ENCODE measurements at regions of chr4 and their contacts with region 1.

Region 1: GRCh38 chr4:41384992-41385391 is 128.3 kb downstream of the UCHL1 start:
- DNase-seq: peak; percentile 99
- H3K4me3 ChIP-seq: no peak overlapping the region
- H3K27ac ChIP-seq: peak overlapping the region; percentile 39
- H3K4me1 ChIP-seq: peaks cover 18% of the 10 kb centered on the region
- H3K27me3 ChIP-seq: peaks cover 3 to 5% of the 10 kb centered on the region in 2 experiments
- CTCF ChIP-seq: no peak
- POLR2A ChIP-seq: peak; percentile 49

Region 2: DNA sequence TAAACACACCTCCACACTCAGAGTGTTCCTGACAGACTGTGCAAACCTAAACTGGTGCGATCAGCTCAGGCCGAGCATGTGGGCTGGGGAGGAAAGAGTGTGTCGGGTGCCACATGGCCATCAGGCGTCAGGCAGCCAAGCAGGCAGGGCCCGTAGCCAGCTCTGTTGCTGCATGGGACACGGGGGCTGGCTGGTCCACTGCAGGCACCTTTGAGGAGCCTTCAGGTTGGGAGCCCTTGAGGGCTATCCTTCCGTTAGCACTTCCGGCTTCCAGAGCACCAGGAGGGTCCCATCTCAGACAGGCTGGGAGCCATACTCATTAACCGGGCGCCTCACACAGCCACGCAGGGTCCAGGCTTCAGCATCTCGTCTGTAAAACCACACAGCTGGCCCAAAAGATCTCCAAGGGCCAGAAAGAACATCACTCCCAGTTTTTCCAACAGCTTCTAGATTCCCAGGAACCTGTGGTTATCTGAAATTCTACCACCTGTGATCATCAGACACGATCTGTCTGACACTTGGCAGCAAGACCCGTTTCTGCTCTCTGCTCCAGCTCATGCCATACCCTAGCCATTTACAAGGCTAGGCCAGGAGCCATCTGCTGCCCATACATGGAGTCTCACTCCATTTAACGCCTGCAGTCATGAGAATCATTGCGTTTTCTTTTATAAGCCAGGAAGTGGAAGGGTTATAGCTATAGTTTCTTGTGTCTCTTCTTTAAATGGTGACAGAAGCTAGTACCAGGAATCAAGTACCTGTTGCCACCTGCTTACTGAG is 547.7 kb before region 1 on chr4:
- CTCF ChIA-PET with region 1: no interaction called
- POLR2A ChIA-PET with region 1: no interaction called
- dilution Hi-C with region 1: no loop called
- intact Hi-C with region 1: no loop called
- DNase-seq: no peak
- H3K4me3 ChIP-seq: no peak overlapping the region
- H3K27ac ChIP-seq: no peak overlapping the region
- H3K4me1 ChIP-seq: peaks cover 4% of the 10 kb centered on the region
- H3K27me3 ChIP-seq: no peaks in the 10 kb centered on the region
- CTCF ChIP-seq: no peak
- POLR2A ChIP-seq: no peak

Region 3: GRCh38 chr4:41072021-41072777 is 312.8 kb before region 1 on chr4:
- CTCF ChIA-PET with region 1: no interaction called
- POLR2A ChIA-PET with region 1: no interaction called
- dilution Hi-C with region 1: no loop called
- intact Hi-C with region 1: no loop called
- DNase-seq: no peak
- H3K4me3 ChIP-seq: no peak overlapping the region
- H3K27ac ChIP-seq: no peak overlapping the region
- H3K4me1 ChIP-seq: no peaks in the 10 kb centered on the region
- H3K27me3 ChIP-seq: no peaks in the 10 kb centered on the region
- CTCF ChIP-seq: no peak
- POLR2A ChIP-seq: no peak

Region 4: DNA sequence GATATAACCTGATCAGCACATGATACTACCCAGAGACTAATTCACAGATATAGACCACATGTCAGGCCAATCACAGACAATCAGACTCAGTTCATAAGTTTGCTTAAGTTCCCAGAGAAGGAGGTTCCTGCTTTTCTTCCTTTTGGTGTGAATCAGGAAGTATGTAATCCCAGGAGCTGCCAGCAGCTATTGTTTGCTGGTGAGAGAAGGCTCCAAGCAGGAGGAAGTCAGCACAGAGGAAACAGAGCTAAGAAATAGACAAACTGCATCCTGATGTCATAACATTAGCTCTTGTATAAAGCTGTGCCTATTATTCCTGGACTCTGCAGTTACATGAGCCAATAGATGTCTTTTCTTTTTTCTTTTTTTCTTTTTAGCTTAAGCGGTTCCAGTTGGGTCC is 77.4 kb before region 1 on chr4:
- CTCF ChIA-PET with region 1: no interaction called
- POLR2A ChIA-PET with region 1: no interaction called
- dilution Hi-C with region 1: no loop called
- intact Hi-C with region 1: loop called (anchors 5 kb)
- DNase-seq: peak; percentile 95
- H3K4me3 ChIP-seq: no peak overlapping the region
- H3K27ac ChIP-seq: peak overlapping the region; percentile 53
- H3K4me1 ChIP-seq: peaks cover 11% of the 10 kb centered on the region
- H3K27me3 ChIP-seq: peaks cover 6 to 7% of the 10 kb centered on the region in 2 experiments
- CTCF ChIP-seq: no peak
- POLR2A ChIP-seq: no peak

Region 5: GRCh38 chr4:41360214-41360920 is 24.6 kb before region 1 on chr4:
- CTCF ChIA-PET with region 1: interaction called, 3 read pairs
- POLR2A ChIA-PET with region 1: no interaction called
- dilution Hi-C with region 1: no loop called
- intact Hi-C with region 1: loop called (anchors 2 kb)
- DNase-seq: peak; percentile 70
- H3K4me3 ChIP-seq: peak overlapping the region; percentile 28 to 76 (median 40)
- H3K27ac ChIP-seq: no peak overlapping the region
- H3K4me1 ChIP-seq: peaks cover 3% of the 10 kb centered on the region
- H3K27me3 ChIP-seq: peaks cover 7 to 52% of the 10 kb centered on the region in 2 experiments
- CTCF ChIP-seq: no peak
- POLR2A ChIP-seq: no peak

Region 6: GRCh38 chr4:41427306-41427882 is 42.4 kb after region 1 on chr4:
- CTCF ChIA-PET with region 1: no interaction called
- POLR2A ChIA-PET with region 1: no interaction called
- dilution Hi-C with region 1: no loop called
- intact Hi-C with region 1: loop called (anchors 1 kb)
- DNase-seq: peak; percentile 98
- H3K4me3 ChIP-seq: no peak overlapping the region
- H3K27ac ChIP-seq: peak overlapping the region; percentile 40
- H3K4me1 ChIP-seq: peaks cover 37% of the 10 kb centered on the region
- H3K27me3 ChIP-seq: peaks cover 17 to 42% of the 10 kb centered on the region in 2 experiments
- CTCF ChIP-seq: no peak
- POLR2A ChIP-seq: no peak

Region 7: GRCh38 chr4:41525129-41525528 is 140.1 kb after region 1 on chr4:
- CTCF ChIA-PET with region 1: no interaction called
- POLR2A ChIA-PET with region 1: no interaction called
- dilution Hi-C with region 1: no loop called
- intact Hi-C with region 1: loop called (anchors 1 kb)
- DNase-seq: peak; percentile 96
- H3K4me3 ChIP-seq: no peak overlapping the region
- H3K27ac ChIP-seq: peak overlapping the region; percentile 98
- H3K4me1 ChIP-seq: peaks cover 21% of the 10 kb centered on the region
- H3K27me3 ChIP-seq: no peaks in the 10 kb centered on the region
- CTCF ChIP-seq: no peak
- POLR2A ChIP-seq: no peak